ENCODE measurements at regions of chr11 and their contacts with region 1.

Region 1: GRCh38 chr11:59787816-59788215 is 22.8 kb downstream of the MRPL16 start:
- DNase-seq: peak; percentile 37
- H3K4me3 Mint-ChIP-seq: no peak overlapping the region
- H3K27ac Mint-ChIP-seq: no peak overlapping the region
- H3K4me1 Mint-ChIP-seq: peaks cover 14% of the 10 kb centered on the region
- H3K27me3 Mint-ChIP-seq: no peaks in the 10 kb centered on the region
- CTCF ChIP-seq: no peak

Region 2: DNA sequence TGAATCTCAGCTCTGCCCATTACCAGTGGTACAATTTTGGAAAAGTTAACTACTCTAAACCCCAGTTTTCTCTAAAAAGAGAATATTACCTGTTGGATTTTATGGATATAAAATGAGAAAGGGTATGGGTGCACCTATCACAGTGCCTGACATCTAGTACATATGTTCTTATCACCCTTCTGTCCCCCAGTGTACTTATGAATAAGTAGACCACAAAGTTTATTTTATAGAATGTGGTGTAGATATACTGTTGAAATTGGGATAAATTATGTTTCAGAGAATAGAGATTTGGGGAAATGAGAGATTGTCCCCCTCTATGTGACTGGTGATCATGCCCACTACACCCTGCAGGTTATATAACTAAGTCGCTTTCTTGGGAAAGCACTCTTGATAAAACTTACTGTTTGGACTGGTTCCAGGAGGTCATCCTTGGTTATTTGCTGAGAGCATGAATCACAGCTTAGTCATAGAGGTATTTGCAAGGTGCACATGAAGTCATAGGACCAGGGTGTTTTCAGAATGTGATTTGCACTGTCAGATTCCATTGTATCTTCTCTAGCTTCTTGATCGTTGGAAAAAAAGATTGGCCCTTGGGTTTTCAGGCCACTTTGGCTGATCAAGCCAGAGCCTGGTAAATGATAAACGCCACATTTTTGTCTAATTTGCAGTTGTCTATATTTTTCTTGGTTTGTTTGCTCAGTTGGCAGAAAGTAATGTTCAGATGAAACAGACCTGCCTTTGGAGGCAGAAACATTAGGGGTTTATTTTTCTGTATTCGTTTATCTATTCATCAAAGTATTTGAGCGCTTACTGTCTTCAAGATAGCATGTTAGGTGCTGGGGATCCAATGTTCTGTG is 11.4 kb before region 1 on chr11:
- CTCF ChIA-PET with region 1: interaction called, 5 read pairs
- POLR2A ChIA-PET with region 1: interaction called, 10 read pairs
- intact Hi-C with region 1: no loop called
- DNase-seq: peak; percentile 94
- H3K4me3 Mint-ChIP-seq: no peak overlapping the region
- H3K27ac Mint-ChIP-seq: no peak overlapping the region
- H3K4me1 Mint-ChIP-seq: peaks cover 14% of the 10 kb centered on the region
- H3K27me3 Mint-ChIP-seq: no peaks in the 10 kb centered on the region
- CTCF ChIP-seq: no peak

Region 3: DNA sequence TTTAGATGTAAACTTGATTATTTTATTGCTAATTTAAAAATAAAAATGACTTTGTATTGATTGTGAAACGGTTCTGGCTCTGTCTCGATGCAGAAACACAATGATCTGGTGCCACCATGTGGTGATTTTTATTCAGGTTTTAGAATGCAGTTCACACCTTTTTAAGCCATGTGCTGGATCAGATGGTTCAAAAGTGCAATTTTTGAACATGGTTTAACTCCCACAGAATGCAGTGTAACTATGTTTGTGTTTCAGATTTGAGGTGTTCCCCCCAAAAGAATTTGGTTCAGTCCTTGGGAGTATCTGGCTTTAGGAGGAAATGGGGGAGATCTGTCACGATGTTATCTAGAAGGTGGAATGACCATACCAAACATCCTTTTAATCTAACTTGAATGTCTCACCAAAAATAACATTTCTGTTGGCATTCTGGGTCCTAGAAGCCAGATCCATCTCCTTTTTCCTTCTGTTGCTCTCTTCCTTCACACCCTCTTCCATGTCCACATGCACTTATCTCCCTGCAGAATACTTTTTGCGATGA is 14.9 kb after region 1 on chr11:
- CTCF ChIA-PET with region 1: interaction called, 12 read pairs
- POLR2A ChIA-PET with region 1: interaction called, 8 read pairs
- intact Hi-C with region 1: no loop called
- DNase-seq: peak; percentile 73
- H3K4me3 Mint-ChIP-seq: no peak overlapping the region
- H3K27ac Mint-ChIP-seq: no peak overlapping the region
- H3K4me1 Mint-ChIP-seq: no peaks in the 10 kb centered on the region
- H3K27me3 Mint-ChIP-seq: no peaks in the 10 kb centered on the region
- CTCF ChIP-seq: peak; percentile 74

Region 4: GRCh38 chr11:59810189-59810910 is 22.5 kb after region 1 on chr11 and contains the start of gene MRPL16:
- CTCF ChIA-PET with region 1: interaction called, 10 read pairs
- POLR2A ChIA-PET with region 1: interaction called, 7 read pairs
- intact Hi-C with region 1: no loop called
- DNase-seq: peak; percentile 90
- H3K4me3 Mint-ChIP-seq: peak within 1 kb of the TSS; percentile 90
- H3K27ac Mint-ChIP-seq: peak within 1 kb of the TSS; percentile 93
- H3K4me1 Mint-ChIP-seq: no peaks in the 10 kb centered on the region
- H3K27me3 Mint-ChIP-seq: no peaks in the 10 kb centered on the region
- CTCF ChIP-seq: no peak
- total RNA-seq, gene MRPL16: 31.8 and 39.8 TPM in 2 replicates